Caco-2 (cell line): ENCODE measurements at regions of chr10 and their contacts with region 1.

Region 1: DNA sequence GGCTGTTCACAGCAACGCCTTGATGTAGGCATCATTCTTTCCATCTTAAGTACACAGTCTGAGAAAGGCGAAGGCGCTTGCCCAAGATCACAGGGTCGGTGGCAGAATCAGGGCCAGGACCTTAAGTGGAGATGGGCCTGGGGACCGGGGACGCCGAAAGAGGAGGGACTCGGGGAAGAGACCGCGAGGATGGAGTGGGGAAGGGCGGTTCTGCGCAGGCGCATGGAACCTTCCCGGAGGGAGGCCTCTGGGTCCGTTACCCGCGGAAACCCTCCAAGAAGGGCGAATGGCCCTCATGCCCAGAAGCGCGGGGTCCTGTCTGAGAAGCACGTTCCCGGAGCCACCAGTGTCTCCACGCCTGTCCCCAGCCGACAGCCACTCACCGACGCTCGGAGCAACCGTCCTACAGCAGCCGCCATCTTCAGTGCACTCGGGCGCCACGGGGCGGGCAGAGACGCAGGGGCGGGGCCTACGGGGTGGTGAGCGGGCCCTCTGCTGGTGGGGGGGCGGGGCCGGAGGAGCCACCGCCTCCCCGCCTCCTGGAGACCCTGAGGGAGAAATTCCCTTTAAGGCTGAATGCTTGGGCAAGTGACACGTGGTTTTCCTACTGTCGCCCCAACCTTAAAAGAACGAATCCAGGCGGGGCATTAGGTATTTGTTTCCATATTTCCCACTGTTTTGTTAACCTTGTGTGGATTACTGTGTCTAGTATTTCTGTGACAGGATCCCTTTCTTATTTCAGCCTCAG is at the start of gene PRDX3:
- DNase-seq: peak; percentile 95 to 97
- H3K4me3 ChIP-seq: peak within 1 kb of the TSS; percentile 59
- H3K4me3 Mint-ChIP-seq: peak within 1 kb of the TSS; percentile 99
- H3K27ac Mint-ChIP-seq: peak within 1 kb of the TSS; percentile 99
- H3K4me1 ChIP-seq: peaks cover 12% of the 10 kb centered on the region
- H3K4me1 Mint-ChIP-seq: peaks cover 7% of the 10 kb centered on the region
- H3K27me3 ChIP-seq: no peaks in the 10 kb centered on the region
- H3K27me3 Mint-ChIP-seq: no peaks in the 10 kb centered on the region
- CTCF ChIP-seq: peak in 1 of 2 experiments; percentile 14
- total RNA-seq, gene PRDX3: 213 and 216 TPM in 2 replicates

Region 2: GRCh38 chr10:118754720-118755480 is 423.6 kb before region 1 on chr10 and contains the start of gene CACUL1:
- CTCF ChIA-PET with region 1: no interaction called
- POLR2A ChIA-PET with region 1: no interaction called
- intact Hi-C with region 1: no loop called
- DNase-seq: peak; percentile 100
- H3K4me3 ChIP-seq: peak within 1 kb of the TSS; percentile 98
- H3K4me3 Mint-ChIP-seq: peak within 1 kb of the TSS; percentile 97
- H3K27ac Mint-ChIP-seq: peak within 1 kb of the TSS; percentile 95
- H3K4me1 ChIP-seq: peaks cover 14% of the 10 kb centered on the region
- H3K4me1 Mint-ChIP-seq: peaks cover 18% of the 10 kb centered on the region
- H3K27me3 ChIP-seq: no peaks in the 10 kb centered on the region
- H3K27me3 Mint-ChIP-seq: no peaks in the 10 kb centered on the region
- CTCF ChIP-seq: no peak
- total RNA-seq, gene CACUL1: 39.2 and 42.7 TPM in 2 replicates

Region 3: GRCh38 chr10:119165171-119166110 is 13.1 kb before region 1 on chr10 and contains the start of gene SFXN4:
- CTCF ChIA-PET with region 1: no interaction called
- POLR2A ChIA-PET with region 1: interaction called, 3 read pairs
- intact Hi-C with region 1: loop called (anchors 2 kb)
- DNase-seq: peak; percentile 85 to 87
- H3K4me3 ChIP-seq: peak within 1 kb of the TSS; percentile 93
- H3K4me3 Mint-ChIP-seq: peak within 1 kb of the TSS; percentile 87
- H3K27ac Mint-ChIP-seq: peak within 1 kb of the TSS; percentile 95
- H3K4me1 ChIP-seq: peaks cover 6% of the 10 kb centered on the region; the same call in 1 of the 2 replicates
- H3K4me1 Mint-ChIP-seq: no peaks in the 10 kb centered on the region
- H3K27me3 ChIP-seq: no peaks in the 10 kb centered on the region
- H3K27me3 Mint-ChIP-seq: no peaks in the 10 kb centered on the region
- CTCF ChIP-seq: no peak
- total RNA-seq, gene SFXN4: 45.3 and 45.9 TPM in 2 replicates